Activated naive CD8-positive, alpha-beta T cell treated with anti-CD3 and anti-CD28 coated beads, Interleukin-2, amount 10 ng/mL, durations not matched to agents 7 days and 5 days (primary cell): ENCODE measurements at regions of chr3 and their contacts with region 1.

Region 1: GRCh38 chr3:9649791-9650521 is 651 bp downstream of the MTMR14 start:
- DNase-seq: no peak
- ATAC-seq: peak; percentile 30
- H3K4me3 Mint-ChIP-seq: peak overlapping the region; percentile 96
- H3K27ac Mint-ChIP-seq: peak overlapping the region; percentile 98
- H3K4me1 Mint-ChIP-seq: peaks cover 13% of the 10 kb centered on the region
- H3K27me3 Mint-ChIP-seq: peaks cover 1% of the 10 kb centered on the region

Region 2: DNA sequence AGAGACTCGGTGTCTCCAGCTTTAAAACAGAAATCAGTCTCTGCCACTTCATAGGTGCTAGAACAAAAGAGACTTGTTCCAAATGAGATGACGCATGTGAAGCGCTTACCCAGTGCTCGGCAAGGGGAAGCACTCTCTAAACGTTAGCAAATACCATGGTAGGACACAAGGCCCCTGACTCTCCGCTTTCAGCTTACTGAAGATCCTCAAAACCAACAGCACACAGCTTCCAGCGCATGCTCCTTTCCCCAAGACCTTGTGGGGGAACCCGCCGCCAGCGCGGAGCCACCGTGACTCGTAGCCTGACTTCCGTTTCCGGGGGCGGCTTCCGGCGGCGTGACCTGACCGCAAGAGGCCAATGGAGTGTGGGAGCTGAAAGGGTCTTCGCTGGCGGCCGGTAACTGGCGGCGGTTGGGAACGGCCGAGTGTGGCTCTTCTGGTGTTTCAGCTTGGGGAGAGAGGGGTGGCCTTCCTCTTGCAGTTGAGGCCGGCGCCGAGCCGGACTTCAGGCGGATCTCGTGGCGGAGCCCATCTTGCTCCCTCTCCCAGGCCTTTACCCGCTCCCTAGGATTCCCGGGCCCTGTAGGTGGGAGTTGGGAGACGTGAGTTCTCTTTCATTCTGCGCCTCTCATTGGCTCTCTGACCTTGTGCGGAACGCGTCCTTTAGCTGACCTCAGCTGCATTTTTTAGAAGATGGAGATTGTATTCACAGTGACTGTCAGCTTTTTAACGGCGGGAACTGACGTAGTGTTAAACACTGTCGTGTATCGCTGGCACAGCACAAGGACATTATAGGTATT is 287.0 kb before region 1 on chr3 and contains the start of gene THUMPD3:
- POLR2A ChIA-PET with region 1: interaction called, 13 read pairs
- DNase-seq: peak; percentile 95
- ATAC-seq: peak; percentile 96
- H3K4me3 Mint-ChIP-seq: peak within 1 kb of the TSS; percentile 93
- H3K27ac Mint-ChIP-seq: peak within 1 kb of the TSS; percentile 96
- H3K4me1 Mint-ChIP-seq: peaks cover 11% of the 10 kb centered on the region
- H3K27me3 Mint-ChIP-seq: peaks cover 6% of the 10 kb centered on the region
- total RNA-seq, gene THUMPD3: 46.6 to 49.9 TPM

Region 3: GRCh38 chr3:9731206-9732079 is 81.5 kb after region 1 on chr3 and contains the start of gene BRPF1:
- POLR2A ChIA-PET with region 1: interaction called, 12 read pairs
- DNase-seq: peak; percentile 97
- ATAC-seq: peak; percentile 92
- H3K4me3 Mint-ChIP-seq: peak within 1 kb of the TSS; percentile 98
- H3K27ac Mint-ChIP-seq: peak within 1 kb of the TSS; percentile 96
- H3K4me1 Mint-ChIP-seq: peaks cover 60% of the 10 kb centered on the region
- H3K27me3 Mint-ChIP-seq: no peaks in the 10 kb centered on the region
- total RNA-seq, gene BRPF1: 57.3 to 58.8 TPM